ENCODE measurements at regions of chr16 and their contacts with region 1.

Region 1: GRCh38 chr16:68590201-68590994 is 51.3 kb downstream of the ZFP90 start:
- DNase-seq: peak; percentile 67
- CTCF ChIP-seq: peak; percentile 74

Region 2: DNA sequence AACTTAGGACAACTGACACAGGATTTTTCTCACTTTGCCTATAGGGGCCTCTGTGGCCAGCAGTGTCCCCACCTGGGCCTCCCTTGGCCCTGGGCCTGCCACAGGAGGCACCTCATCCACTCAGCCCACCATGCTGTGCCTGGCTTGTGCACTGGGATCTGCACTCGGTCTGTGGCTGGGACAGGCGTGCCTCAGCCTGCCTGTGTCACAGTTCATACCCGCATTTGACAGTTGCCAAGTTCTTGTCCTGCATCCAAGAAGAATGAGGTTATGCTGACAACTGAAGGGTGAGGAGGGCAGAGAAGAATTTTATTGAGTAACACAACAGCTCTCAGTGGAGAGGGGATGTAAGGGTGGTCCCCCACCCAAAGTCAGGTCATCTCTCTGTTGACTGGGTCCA is 15.3 kb before region 1 on chr16:
- CTCF ChIA-PET with region 1: interaction called, 16 read pairs
- POLR2A ChIA-PET with region 1: no interaction called
- DNase-seq: no peak
- CTCF ChIP-seq: no peak

Region 3: GRCh38 chr16:68737046-68737729 is 146.8 kb after region 1 on chr16 and contains the start of gene CDH1:
- CTCF ChIA-PET with region 1: no interaction called
- POLR2A ChIA-PET with region 1: no interaction called
- DNase-seq: peak; percentile 35
- CTCF ChIP-seq: no peak

Measured in GM10248 (cell line).